Activated naive CD4-positive, alpha-beta T cell treated with anti-CD3 and anti-CD28 coated beads for 36 hours (primary cell): ENCODE measurements at regions of chr6 and their contacts with region 1.

Region 1: DNA sequence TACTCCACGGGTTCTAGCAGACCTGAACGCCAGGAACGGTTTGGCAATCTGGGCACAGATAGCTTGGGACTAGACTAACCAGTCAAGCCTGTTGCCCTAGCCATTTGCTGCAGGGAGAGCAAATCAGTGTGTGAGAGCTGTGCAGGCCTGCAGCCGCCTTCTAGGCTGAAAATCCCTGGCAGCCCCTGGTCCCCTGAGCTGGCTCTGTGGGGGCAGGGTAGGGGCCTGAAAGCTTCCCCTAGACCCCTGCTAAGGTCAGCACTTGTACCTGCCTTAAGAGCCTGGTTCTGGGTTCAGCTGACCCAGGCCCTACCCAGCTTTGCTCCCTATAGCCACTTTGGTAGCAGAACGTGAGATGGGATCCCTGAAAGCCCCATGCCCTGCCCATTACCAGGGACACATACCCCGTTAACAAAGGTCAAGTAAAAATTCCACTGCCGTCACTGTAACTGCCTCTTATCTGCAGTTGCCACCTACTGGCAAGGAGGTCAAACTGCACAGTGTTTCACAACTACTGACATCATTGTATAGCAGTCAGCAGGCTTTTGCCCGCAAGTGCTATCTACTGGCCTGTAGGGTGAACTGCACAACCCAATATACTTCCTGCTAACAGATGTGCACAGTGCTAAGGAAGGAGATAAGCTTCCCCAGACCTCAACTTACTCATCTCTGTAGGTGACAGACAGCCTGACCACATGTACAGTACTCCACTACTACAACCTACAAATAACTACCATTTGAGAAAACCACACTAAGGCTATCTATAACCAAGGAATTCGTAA is 95.1 kb upstream of the OLIG3 start:
- DNase-seq: peak; percentile 74
- H3K4me3 Mint-ChIP-seq: no peak overlapping the region
- H3K27ac Mint-ChIP-seq: no peak overlapping the region
- H3K4me1 Mint-ChIP-seq: peaks cover 7% of the 10 kb centered on the region
- H3K27me3 Mint-ChIP-seq: peaks cover 2% of the 10 kb centered on the region

Region 2: DNA sequence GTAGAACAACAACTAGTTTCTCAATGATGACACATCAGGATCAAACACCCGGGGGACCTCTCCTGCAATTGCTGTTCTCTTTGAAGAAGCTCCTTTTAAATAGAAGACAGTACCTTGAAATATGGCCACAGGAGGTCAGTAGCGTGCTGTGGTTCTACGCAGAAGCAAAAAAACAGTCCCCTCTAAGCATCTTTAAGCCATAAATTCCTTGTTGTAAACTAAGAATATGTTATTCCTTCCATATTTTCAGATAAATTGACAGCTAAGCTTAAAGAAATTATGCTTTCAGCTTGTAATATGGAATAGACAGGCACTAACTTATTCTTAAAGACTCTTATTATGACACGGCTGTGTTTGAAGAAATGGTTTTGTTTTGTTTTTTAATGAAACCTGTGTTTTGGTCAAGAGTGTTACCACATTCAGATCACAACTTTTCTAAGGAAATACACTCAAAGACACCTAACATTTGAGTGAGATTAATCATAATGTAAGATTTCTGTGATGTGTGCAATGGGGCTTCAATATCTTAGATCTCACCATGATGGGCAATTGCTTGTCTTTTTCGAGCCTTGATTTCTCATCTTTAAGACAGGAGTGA is 494.7 kb before region 1 on chr6:
- CTCF ChIA-PET with region 1: no interaction called
- intact Hi-C with region 1: loop called (anchors 1 kb)
- DNase-seq: peak; percentile 75
- H3K4me3 Mint-ChIP-seq: no peak overlapping the region
- H3K27ac Mint-ChIP-seq: no peak overlapping the region
- H3K4me1 Mint-ChIP-seq: peaks cover 13% of the 10 kb centered on the region
- H3K27me3 Mint-ChIP-seq: peaks cover 3% of the 10 kb centered on the region

Region 3: DNA sequence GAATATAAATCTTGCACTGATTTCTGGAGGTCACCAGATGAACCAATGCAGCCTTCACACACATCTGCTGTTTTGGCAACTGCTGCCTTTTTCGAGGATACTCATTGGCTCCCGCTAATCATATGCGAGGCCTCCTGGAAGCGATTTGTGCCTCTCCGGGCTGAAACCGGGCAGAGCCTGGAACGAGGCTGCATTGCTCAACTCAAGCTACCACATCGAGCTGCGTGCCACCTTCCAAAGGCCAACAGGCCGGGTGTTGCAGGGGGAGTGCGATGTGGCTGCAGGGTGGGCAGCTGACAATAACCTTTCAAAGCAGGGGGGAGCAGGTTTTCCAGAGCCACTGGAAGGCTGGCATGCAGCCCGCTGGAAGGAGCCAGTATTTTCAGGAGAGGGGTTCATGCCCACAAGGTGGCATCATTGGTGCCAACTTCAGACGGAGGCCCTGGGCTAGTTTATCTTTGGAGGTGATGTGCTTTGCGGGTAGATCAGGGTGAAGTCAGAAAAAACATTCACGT is 247.5 kb before region 1 on chr6:
- CTCF ChIA-PET with region 1: interaction called, 5 read pairs
- intact Hi-C with region 1: loop called (anchors 1 kb)
- DNase-seq: peak; percentile 69
- H3K4me3 Mint-ChIP-seq: peak overlapping the region; percentile 12
- H3K27ac Mint-ChIP-seq: no peak overlapping the region
- H3K4me1 Mint-ChIP-seq: peaks cover 7% of the 10 kb centered on the region
- H3K27me3 Mint-ChIP-seq: no peaks in the 10 kb centered on the region

Region 4: GRCh38 chr6:137475103-137475502 is 114.2 kb before region 1 on chr6:
- CTCF ChIA-PET with region 1: interaction called, 4 read pairs
- intact Hi-C with region 1: loop called (anchors 1 kb)
- DNase-seq: no peak
- H3K4me3 Mint-ChIP-seq: no peak overlapping the region
- H3K27ac Mint-ChIP-seq: no peak overlapping the region
- H3K4me1 Mint-ChIP-seq: no peaks in the 10 kb centered on the region
- H3K27me3 Mint-ChIP-seq: peaks cover 6% of the 10 kb centered on the region

Region 5: GRCh38 chr6:137536104-137536773 is 53.0 kb before region 1 on chr6:
- CTCF ChIA-PET with region 1: interaction called, 11 read pairs
- intact Hi-C with region 1: no loop called
- DNase-seq: peak; percentile 62
- H3K4me3 Mint-ChIP-seq: no peak overlapping the region
- H3K27ac Mint-ChIP-seq: no peak overlapping the region
- H3K4me1 Mint-ChIP-seq: no peaks in the 10 kb centered on the region
- H3K27me3 Mint-ChIP-seq: no peaks in the 10 kb centered on the region